Naive thymus-derived CD4-positive, alpha-beta T cell (primary cell): ENCODE measurements at regions of chr5 and their contacts with region 1.

Region 1: GRCh38 chr5:87008751-87009560 is 258.7 kb upstream of the RASA1 start:
- DNase-seq: no peak
- ATAC-seq: no peak
- H3K4me3 ChIP-seq: no peak overlapping the region
- H3K4me3 Mint-ChIP-seq: no peak overlapping the region
- H3K27ac ChIP-seq: no peak overlapping the region
- H3K27ac Mint-ChIP-seq: no peak overlapping the region
- H3K4me1 ChIP-seq: no peaks in the 10 kb centered on the region
- H3K4me1 Mint-ChIP-seq: no peaks in the 10 kb centered on the region
- H3K27me3 ChIP-seq: no peaks in the 10 kb centered on the region
- H3K27me3 Mint-ChIP-seq: peaks cover 0 to 20% (median 0%) of the 10 kb centered on the region in 5 donors

Region 2: GRCh38 chr5:86880785-86881492 is 128.0 kb before region 1 on chr5:
- CTCF ChIA-PET with region 1: no interaction called
- POLR2A ChIA-PET with region 1: no interaction called
- intact Hi-C with region 1: loop called (anchors 1 kb)
- DNase-seq: peak in 8 of 9 donors; percentile 11 to 45 (median 28)
- ATAC-seq: peak; percentile 86
- H3K4me3 ChIP-seq: no peak overlapping the region
- H3K4me3 Mint-ChIP-seq: no peak overlapping the region
- H3K27ac ChIP-seq: no peak overlapping the region
- H3K27ac Mint-ChIP-seq: no peak overlapping the region
- H3K4me1 ChIP-seq: no peaks in the 10 kb centered on the region
- H3K4me1 Mint-ChIP-seq: no peaks in the 10 kb centered on the region
- H3K27me3 ChIP-seq: no peaks in the 10 kb centered on the region
- H3K27me3 Mint-ChIP-seq: peaks cover 0 to 19% (median 7%) of the 10 kb centered on the region in 5 donors